Right ventricle myocardium superior (tissue), 1 donor: ENCODE measurements at regions of chr4 and their contacts with region 1.

Region 1: DNA sequence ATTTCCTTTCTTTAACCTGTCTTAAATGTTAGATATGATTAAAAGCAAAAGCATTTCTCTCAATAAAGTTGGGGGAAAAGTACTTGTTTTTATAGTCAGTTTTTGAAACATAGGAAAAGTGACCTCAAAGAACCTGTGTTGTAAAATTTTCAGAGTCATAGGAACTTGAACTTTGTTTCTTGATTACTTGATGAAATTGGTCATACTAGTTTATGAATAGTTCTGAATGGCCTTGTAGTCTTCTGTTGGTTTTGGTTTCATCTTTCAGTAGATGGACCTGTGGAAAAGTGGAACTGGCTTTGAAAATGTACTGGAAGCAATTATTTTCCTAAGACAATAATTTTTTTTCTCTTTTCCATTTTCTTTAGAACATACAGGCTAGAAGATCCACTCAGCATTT is 222.2 kb upstream of the NUDT6 start:
- DNase-seq: no peak
- ATAC-seq: no peak

Region 2: DNA sequence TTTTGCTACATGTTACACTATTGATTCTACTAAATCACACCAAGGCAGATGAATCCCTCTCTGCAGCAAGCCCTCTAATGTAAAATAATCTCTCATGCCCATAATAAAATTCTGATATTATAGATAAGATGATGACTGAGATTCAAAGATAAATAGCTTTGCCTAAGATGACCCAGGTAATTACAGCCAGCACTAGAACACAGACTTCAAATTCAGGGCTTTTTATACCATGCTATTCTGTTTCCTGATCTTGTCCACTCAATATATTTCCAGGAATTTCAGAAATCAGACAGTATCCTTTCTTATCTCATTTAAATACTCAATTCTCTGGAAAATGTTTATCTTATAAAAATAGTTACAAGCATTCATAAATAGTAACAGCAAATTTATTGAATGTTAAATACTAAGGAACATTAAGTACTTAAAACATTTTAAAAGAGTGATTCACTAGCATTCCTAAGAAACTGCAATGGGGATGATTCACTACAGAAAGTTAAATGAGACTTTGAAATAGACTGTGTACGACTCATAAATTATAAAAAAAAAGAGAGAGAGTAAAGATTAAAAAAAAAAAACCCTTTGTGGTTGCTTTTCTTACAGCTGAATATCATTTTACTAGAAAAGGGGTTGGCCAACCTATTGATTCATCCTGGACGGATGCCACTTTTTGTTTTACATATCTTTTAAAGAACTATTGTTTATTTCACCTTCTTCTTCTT is 477.9 kb before region 1 on chr4:
- intact Hi-C with region 1: no loop called
- DNase-seq: no peak
- ATAC-seq: no peak

Region 3: GRCh38 chr4:123232439-123232838 is 87.8 kb after region 1 on chr4:
- intact Hi-C with region 1: loop called (anchors 10 kb)
- DNase-seq: no peak
- ATAC-seq: peak; percentile 64

Region 4: GRCh38 chr4:123952520-123953274 is 808.1 kb after region 1 on chr4:
- intact Hi-C with region 1: no loop called
- DNase-seq: no peak
- ATAC-seq: no peak